Ascending aorta (tissue), 2 donors: ENCODE measurements at regions of chr7 and their contacts with region 1.

Region 1: DNA sequence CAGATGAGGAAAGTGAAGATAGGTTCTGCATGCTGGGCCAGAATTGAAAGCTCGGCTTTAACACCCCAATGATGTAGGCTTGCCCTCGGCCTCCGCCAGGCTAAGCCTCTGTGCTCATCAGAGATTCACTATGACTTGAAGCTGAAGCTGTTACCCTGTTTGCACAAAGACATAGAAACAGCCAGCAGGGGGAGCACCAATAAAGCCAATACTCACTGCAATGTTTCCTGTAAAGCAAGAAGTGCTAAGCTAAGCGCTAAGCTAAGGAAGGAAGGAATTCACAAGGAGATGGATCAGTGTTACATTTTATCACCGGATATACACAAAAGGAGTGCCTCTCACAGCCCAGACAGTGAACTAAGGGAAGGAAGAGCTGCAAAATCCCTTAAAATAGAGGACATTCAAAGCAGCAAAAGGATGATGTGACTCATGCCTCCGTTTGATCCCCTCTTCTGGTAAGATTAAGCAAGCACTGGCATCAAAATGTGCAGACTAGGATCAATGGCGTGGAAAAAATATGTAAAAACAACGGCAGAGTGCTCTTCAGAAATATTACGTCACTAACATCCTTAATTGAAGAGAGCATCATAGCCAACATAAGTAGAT is 153.8 kb downstream of the COBL start:
- DNase-seq: peak in 1 of 2 donors; percentile 73
- H3K4me3 ChIP-seq: no peak overlapping the region
- H3K27ac ChIP-seq: no peak overlapping the region
- H3K4me1 ChIP-seq: no peaks in the 10 kb centered on the region
- H3K27me3 ChIP-seq: no peaks in the 10 kb centered on the region
- CTCF ChIP-seq: peak; percentile 37 to 73 (median 70)

Region 2: DNA sequence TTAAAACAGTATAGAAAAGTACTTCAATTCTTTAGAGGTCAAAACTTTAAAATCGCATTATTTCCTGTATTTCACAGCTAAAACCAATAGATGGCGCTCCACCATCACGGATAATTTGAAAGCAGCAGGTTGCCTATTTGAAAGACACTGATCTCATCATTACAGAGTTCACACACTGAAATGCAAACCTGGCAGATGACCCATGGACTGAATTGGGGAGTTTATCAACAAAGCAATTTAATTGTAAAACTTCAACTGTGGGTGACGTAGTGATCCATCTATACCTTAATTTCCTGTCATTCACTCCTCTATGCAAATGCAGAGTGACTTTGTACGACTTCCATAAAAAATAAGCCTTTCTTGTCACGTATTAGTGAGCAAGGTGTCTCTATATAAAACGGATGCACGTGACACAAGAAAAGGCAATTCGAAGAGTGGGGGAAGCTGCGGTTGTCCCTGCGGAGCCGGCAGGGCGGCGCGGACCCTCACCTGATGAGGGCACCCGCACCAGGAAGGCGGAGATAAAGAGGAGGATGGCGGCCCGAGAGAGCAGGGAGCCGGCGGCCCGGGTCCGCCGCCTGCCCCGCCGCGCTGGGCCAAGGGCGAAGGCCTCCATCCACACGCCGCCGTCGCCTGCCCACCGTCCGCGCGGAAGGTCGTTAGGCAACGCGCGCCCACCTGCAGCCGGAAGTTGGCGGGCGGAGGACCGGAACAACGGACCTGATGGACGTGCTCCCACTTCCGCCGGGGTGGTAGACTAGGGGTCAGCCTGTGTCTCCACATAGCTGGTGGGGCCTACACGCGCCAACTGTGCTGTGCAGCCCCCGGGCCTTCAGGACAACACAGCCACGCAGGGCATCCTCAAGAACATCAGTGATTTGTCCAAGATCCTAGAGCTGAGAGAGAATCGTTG is 1070.0 kb before region 1 on chr7 and contains the start of gene ZPBP:
- intact Hi-C with region 1: loop called (anchors 2 kb)
- DNase-seq: no peak
- H3K4me3 ChIP-seq: peak within 1 kb of the TSS; percentile 51 to 59
- H3K27ac ChIP-seq: no peak within 1 kb of the TSS
- H3K4me1 ChIP-seq: peaks cover 0 to 5% of the 10 kb centered on the region in 2 donors
- H3K27me3 ChIP-seq: no peaks in the 10 kb centered on the region
- CTCF ChIP-seq: peak in 2 of 3 experiments; percentile 46 to 63
- total RNA-seq, gene ZPBP: not detected

Region 3: DNA sequence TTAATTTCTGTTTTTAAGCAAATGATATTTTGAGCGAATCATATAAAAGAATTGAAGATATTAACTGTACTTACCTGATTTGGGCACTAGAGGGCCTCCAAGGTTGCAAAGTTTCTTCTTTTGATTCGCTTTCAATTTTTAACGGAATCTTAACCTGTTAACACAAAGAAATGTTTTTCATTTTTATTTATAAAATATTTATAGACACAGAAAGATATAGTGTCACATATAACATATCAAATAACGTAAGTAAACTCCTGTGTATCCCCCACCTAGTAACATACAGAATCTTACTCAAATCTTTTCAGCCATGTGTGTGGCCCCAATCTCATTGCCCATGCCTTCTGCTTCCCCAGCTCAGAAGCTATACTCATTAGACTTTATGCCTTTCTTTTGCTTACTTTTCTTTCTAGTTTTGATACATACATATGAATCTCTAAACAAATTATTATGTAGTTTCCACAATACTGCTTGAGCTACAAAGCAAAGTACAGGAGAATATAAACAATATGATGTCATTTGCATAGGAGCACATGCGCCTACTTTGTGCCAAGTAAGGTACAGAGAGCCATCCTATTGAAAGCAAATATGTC is 1020.3 kb before region 1 on chr7:
- intact Hi-C with region 1: loop called (anchors 5 kb)
- DNase-seq: no peak
- H3K4me3 ChIP-seq: no peak overlapping the region
- H3K27ac ChIP-seq: no peak overlapping the region
- H3K4me1 ChIP-seq: no peaks in the 10 kb centered on the region
- H3K27me3 ChIP-seq: no peaks in the 10 kb centered on the region
- CTCF ChIP-seq: peak; percentile 27 to 63 (median 60)